H1 (cell line): ENCODE measurements at regions of chr18 and their contacts with region 1.

Region 1: DNA sequence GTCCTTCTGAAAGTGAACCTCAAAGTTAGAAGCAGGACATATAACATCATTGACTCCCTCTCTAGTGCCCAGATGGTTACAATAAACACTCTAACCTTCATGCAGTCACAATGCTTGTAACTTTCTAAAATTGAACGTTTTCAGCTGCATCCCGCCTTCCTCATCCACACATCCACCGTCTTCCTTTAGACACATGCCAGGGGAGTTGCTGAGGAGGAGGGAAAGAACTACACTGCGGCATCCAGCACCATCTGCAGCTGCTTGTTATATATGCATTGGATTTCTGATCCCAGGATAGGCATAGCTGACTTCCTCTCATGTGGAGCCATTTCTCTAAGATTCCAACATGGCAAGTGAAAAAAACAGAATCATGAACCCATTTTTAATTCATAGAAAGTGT is 96.8 kb downstream of the FBXO15 start:
- DNase-seq: no peak
- H3K4me3 ChIP-seq: no peak overlapping the region
- H3K27ac ChIP-seq: no peak overlapping the region
- H3K4me1 ChIP-seq: no peaks in the 10 kb centered on the region
- H3K27me3 ChIP-seq: no peaks in the 10 kb centered on the region
- CTCF ChIP-seq: no peak
- EP300 ChIP-seq: no peak
- POLR2A ChIP-seq: no peak
- RAD21 ChIP-seq: no peak

Region 2: DNA sequence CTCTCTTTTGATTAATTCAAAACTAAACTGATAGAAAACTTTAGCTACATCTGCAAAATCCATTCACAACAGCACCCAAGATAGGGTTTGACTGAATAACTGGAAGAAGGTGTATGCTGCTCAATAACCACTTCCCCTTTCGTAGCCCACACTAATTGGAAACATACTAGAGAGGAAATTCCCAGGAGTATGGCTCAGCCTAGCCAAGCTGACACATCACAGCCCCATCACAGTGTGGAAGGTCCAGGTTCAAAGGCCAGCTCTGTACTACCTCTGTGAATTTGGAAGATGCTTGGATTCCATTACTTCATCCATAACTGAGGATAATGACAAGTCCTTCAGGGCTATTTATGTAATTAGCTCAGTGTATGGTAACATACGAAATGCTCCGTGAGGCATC is 88.6 kb before region 1 on chr18:
- CTCF ChIA-PET with region 1: no interaction called
- POLR2A ChIA-PET with region 1: no interaction called
- DNase-seq: no peak
- H3K4me3 ChIP-seq: no peak overlapping the region
- H3K27ac ChIP-seq: no peak overlapping the region
- H3K4me1 ChIP-seq: peaks cover 0 to 2% (median 2%) of the 10 kb centered on the region in 4 experiments; a peak in 3 of 7 replicates
- H3K27me3 ChIP-seq: no peaks in the 10 kb centered on the region
- CTCF ChIP-seq: no peak
- EP300 ChIP-seq: no peak
- POLR2A ChIP-seq: no peak
- RAD21 ChIP-seq: no peak

Region 3: GRCh38 chr18:74040459-74041332 is 10.1 kb before region 1 on chr18:
- CTCF ChIA-PET with region 1: interaction called, 14 read pairs
- POLR2A ChIA-PET with region 1: no interaction called
- DNase-seq: peak in 1 of 2 experiments; percentile 88
- H3K4me3 ChIP-seq: no peak overlapping the region
- H3K27ac ChIP-seq: no peak overlapping the region
- H3K4me1 ChIP-seq: peaks cover 0 to 5% (median 2%) of the 10 kb centered on the region in 4 experiments; a peak in 3 of 7 replicates
- H3K27me3 ChIP-seq: no peaks in the 10 kb centered on the region
- CTCF ChIP-seq: peak; percentile 79 to 87 (median 80)
- EP300 ChIP-seq: no peak
- POLR2A ChIP-seq: no peak
- RAD21 ChIP-seq: peak; percentile 61 to 73